ENCODE measurements at regions of chr16 and their contacts with region 1.

Region 1: GRCh38 chr16:75198135-75198600 is 8.8 kb downstream of the CTRB2 start:
- DNase-seq: no peak
- ATAC-seq: no peak
- H3K4me3 ChIP-seq: no peak overlapping the region
- H3K4me3 Mint-ChIP-seq: no peak overlapping the region
- H3K27ac ChIP-seq: no peak overlapping the region
- H3K27ac Mint-ChIP-seq: no peak overlapping the region
- H3K4me1 ChIP-seq: peaks cover 4% of the 10 kb centered on the region
- H3K4me1 Mint-ChIP-seq: no peaks in the 10 kb centered on the region
- H3K27me3 ChIP-seq: peaks cover 2% of the 10 kb centered on the region
- H3K27me3 Mint-ChIP-seq: peaks cover 20 to 29% of the 10 kb centered on the region in 2 donors
- CTCF ChIP-seq: no peak

Region 2: DNA sequence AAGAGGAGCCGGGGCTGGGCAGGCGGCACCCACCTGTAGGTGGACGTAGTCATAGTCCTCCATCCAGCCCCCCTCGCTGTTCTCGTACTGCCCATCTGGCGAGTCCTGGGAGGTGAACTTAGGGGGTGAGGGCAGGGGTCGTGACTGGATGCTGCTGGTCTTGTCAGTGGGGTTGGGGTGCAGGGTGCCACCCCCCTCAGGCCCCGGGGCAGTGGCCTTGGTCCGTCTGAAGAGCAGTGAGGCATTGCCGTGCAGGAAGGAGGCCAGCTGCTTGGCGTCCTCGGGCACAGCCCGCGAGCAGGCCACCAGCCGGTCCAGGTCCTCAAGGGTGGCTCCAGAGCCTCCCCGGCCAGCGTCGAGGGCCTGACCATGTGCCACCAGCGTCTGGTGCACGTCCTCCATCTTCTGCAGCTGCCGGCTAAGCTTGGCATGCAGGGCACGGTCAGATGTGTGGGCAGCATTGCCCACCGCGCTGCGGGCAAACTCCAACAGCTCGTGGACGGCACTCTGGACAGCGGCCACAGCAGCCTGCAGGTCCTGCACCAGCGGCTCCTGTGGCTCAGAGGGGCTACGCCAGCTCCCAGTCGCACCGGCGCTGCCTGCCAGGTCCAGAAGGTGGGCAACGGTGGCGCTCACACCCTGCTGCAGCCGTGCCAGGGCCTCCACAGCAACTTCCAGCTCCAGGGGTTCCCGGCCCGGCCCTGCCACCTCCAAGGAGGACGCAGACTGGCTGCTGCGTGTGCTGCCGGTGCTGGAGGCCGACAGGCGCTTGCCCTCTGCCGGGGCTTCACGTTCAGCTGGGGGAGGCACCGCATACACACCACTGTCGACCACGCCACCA is 36.9 kb after region 1 on chr16:
- intact Hi-C with region 1: loop called (anchors 5 kb)
- DNase-seq: no peak
- ATAC-seq: no peak
- H3K4me3 ChIP-seq: no peak overlapping the region
- H3K4me3 Mint-ChIP-seq: no peak overlapping the region
- H3K27ac ChIP-seq: no peak overlapping the region
- H3K27ac Mint-ChIP-seq: no peak overlapping the region
- H3K4me1 ChIP-seq: peaks cover 15% of the 10 kb centered on the region
- H3K4me1 Mint-ChIP-seq: peaks cover 0 to 18% of the 10 kb centered on the region in 2 donors
- H3K27me3 ChIP-seq: peaks cover 8% of the 10 kb centered on the region
- H3K27me3 Mint-ChIP-seq: peaks cover 3 to 16% of the 10 kb centered on the region in 2 donors
- CTCF ChIP-seq: no peak

Region 3: DNA sequence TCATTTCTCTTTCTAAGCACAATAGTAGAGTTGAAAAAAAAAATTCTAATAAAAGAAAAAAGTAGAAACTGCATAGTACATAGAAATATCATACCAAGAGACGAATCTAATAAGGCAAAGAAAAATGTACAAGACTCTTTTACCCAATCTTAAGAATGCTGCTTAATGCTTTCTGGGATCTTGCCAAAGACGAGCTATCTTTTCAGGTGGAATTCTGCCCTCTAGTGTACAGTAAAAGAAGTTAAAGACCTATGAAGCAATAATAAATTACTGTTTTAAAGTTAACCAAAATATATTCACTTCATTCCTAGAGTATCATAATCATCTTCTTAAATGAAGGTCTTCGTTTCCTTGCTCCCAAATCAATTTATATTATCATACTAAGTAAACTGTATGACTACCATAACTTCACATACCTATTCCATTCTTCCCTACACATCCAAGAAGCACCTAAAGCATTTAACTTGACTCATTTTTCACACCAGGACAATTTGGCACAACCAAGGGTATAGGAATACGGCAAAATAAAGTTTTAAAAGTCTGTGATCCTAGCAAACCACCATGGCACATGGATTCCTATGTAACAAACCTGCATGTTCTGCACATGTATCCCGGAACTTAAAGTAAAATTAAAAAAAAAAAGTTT is 187.5 kb after region 1 on chr16:
- intact Hi-C with region 1: loop called (anchors 1 kb)
- DNase-seq: peak in 1 of 2 donors; percentile 84
- ATAC-seq: peak in 2 of 3 donors; percentile 52 to 53
- H3K4me3 ChIP-seq: no peak overlapping the region
- H3K4me3 Mint-ChIP-seq: no peak overlapping the region
- H3K27ac ChIP-seq: no peak overlapping the region
- H3K27ac Mint-ChIP-seq: no peak overlapping the region
- H3K4me1 ChIP-seq: no peaks in the 10 kb centered on the region
- H3K4me1 Mint-ChIP-seq: peaks cover 9 to 16% of the 10 kb centered on the region in 2 donors
- H3K27me3 ChIP-seq: no peaks in the 10 kb centered on the region
- H3K27me3 Mint-ChIP-seq: peaks cover 0 to 8% of the 10 kb centered on the region in 2 donors
- CTCF ChIP-seq: peak; percentile 88

Region 4: DNA sequence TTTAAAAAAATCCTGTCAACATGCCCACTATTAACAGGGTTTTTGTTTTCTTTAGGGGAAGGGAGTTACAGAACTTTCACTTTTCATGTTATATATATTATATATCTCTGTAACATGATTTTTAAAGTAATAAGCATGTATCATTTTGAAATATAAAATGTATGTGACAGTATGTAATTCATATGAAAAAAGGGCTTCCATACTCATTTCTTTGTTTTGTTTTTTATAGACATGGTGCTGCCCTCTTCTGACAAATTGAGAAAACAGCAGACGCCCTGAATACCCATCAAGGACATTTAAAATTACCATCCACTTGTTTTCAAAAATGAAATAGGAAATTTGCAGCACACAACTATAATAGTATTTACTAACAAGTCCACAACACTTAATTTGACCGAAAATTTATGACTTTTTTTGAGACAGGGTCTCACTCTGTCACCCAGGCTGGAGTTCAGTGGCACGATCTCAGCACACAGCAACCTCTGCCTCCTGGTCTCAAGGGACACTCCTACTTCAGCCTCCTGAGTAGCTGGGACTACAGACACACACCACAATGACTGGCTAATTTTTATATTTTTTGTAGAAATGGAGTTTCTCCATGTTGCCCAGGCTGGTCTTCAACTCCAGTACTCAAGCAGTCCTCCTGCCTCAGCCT is 204.8 kb after region 1 on chr16:
- intact Hi-C with region 1: loop called (anchors 1 kb)
- DNase-seq: peak in 1 of 2 donors; percentile 59
- ATAC-seq: peak; percentile 40 to 52 (median 48)
- H3K4me3 ChIP-seq: no peak overlapping the region
- H3K4me3 Mint-ChIP-seq: no peak overlapping the region
- H3K27ac ChIP-seq: no peak overlapping the region
- H3K27ac Mint-ChIP-seq: no peak overlapping the region
- H3K4me1 ChIP-seq: no peaks in the 10 kb centered on the region
- H3K4me1 Mint-ChIP-seq: peaks cover 0 to 7% of the 10 kb centered on the region in 2 donors
- H3K27me3 ChIP-seq: no peaks in the 10 kb centered on the region
- H3K27me3 Mint-ChIP-seq: no peaks in the 10 kb centered on the region
- CTCF ChIP-seq: peak; percentile 64

Region 5: DNA sequence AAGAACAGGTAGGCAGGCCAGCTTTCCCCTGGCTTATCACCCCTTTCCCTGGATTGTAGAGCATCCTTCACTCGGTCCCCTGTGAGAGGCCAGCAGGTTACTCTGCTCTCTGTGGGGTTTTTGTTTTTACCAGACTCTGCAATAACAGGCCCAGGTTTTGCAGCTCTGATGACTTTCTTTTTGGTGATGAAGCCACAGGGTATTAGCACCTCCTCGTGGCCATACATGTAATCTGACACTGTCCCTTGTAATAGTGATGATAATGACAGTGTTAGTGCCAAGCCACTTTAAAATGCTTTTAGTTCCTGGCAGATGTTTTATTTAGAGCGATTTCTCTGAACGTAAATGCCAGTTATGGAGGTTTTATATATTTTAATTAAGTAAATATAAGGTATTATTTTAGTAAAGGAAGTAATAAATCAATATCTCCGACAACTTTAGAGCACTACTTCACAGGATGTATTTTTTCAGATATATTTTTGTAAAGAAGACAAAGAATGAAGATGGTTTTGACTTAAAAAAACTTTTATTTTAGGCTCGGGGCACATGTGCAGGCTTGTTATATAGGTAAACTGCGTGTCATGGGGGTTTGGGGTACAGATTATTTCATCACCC is 566.1 kb after region 1 on chr16:
- intact Hi-C with region 1: loop called (anchors 1 kb)
- DNase-seq: peak in 1 of 2 donors; percentile 86
- ATAC-seq: peak; percentile 83 to 93 (median 91)
- H3K4me3 ChIP-seq: no peak overlapping the region
- H3K4me3 Mint-ChIP-seq: no peak overlapping the region
- H3K27ac ChIP-seq: no peak overlapping the region
- H3K27ac Mint-ChIP-seq: no peak overlapping the region
- H3K4me1 ChIP-seq: no peaks in the 10 kb centered on the region
- H3K4me1 Mint-ChIP-seq: no peaks in the 10 kb centered on the region
- H3K27me3 ChIP-seq: no peaks in the 10 kb centered on the region
- H3K27me3 Mint-ChIP-seq: peaks cover 3 to 29% of the 10 kb centered on the region in 2 donors
- CTCF ChIP-seq: peak; percentile 76